Aorta (tissue), 5 donors: ENCODE measurements at regions of chr7 and their contacts with region 1.

Region 1: GRCh38 chr7:137606061-137606674 is 240.6 kb downstream of the DGKI start:
- DNase-seq: no peak
- ATAC-seq: no peak
- H3K4me3 ChIP-seq: no peak overlapping the region
- H3K27ac ChIP-seq: no peak overlapping the region
- H3K4me1 ChIP-seq: no peaks in the 10 kb centered on the region
- H3K27me3 ChIP-seq: no peaks in the 10 kb centered on the region

Region 2: DNA sequence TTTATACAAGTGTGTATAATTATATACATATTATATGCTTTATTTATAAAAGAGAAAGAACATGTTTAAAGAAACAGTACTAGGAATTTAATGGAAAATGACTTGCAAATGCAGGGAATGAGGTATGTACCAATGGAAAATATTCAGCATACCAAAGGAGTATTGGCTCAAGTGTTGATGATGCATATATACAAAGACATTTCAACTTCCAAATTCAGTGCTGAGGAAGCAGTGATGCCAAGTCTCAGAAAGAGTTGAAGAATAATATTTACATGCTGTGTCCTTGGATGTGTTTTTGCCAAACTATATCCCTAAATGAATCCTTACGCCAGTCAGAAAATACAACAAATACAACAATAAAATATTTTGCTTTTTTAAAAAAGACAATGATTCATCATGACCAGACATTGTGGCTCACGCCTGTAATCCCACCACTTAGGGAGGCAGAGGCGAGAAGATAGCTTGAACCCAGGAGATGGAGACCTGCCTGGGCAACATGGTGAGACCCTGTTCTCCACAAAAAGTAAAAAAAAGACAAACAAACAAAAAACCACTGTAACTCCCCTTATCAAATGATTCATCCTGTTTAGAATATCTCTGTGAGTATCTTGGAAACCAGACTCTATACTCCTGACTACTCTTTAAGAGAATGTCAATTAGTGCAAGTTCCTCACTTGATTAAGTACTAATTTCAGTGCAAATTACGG is 580.5 kb before region 1 on chr7:
- intact Hi-C with region 1: no loop called
- DNase-seq: no peak
- ATAC-seq: no peak
- H3K4me3 ChIP-seq: no peak overlapping the region
- H3K27ac ChIP-seq: no peak overlapping the region
- H3K4me1 ChIP-seq: no peaks in the 10 kb centered on the region
- H3K27me3 ChIP-seq: no peaks in the 10 kb centered on the region

Region 3: DNA sequence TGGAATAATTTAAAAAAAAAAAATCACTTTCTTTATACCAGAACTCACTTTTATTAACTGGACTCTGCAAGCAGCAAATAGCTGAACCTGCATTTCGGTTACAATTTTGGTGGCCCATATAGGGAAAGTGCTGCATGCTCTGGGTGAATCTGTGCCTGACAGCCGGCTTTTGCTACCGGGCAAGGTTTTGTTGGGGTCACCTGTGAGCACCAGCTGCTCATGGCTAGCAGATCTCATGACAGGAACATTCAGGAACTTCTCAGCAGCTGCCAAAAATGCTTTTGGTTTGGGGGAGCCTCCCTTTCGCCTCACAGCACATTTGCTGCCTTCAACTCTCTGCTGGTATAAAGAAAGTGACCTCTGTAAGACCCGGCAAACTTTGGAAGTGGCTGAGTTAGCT is 408.9 kb after region 1 on chr7:
- intact Hi-C with region 1: loop called (anchors 5 to 10 kb)
- DNase-seq: no peak
- ATAC-seq: no peak
- H3K4me3 ChIP-seq: no peak overlapping the region
- H3K27ac ChIP-seq: no peak overlapping the region
- H3K4me1 ChIP-seq: no peaks in the 10 kb centered on the region
- H3K27me3 ChIP-seq: no peaks in the 10 kb centered on the region

Region 4: DNA sequence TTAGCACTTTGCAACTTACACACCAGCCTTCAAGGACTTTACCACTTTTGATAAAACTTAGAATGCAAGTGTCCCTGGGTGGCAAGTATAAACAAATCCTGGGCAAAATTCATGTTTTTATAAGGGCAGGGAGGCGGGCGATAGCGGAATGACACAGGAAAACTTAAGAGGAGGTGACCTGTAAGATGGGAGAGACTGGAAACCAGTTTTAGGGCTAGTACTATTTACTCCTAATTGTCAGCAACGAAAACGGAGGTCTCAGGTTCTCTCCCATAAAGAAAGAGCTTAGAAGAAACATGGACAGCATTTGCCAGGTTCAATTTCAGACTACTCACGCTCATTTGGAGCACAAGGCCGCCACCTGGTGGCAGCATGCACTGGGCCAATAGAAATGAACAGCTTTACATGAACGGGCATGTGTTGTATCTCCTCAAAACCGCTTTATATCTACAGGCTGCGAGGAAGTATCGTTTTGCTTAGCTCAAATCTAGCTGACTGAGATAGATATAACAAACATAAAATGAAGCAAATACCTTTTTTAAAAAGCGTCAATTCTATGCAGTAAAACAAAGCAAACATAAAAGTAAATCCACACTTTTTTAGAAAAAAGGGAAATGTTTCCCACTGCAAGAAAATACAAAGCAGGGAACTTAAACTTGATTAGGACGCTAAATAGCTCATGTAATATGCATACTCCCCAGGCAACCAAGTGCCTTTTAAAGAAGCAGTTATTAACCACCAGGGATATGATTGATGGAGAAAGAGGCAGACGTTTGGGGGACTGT is 1132.6 kb after region 1 on chr7:
- intact Hi-C with region 1: loop called (anchors 10 kb)
- DNase-seq: peak; percentile 86 to 88
- ATAC-seq: peak; percentile 48
- H3K4me3 ChIP-seq: no peak overlapping the region
- H3K27ac ChIP-seq: no peak overlapping the region
- H3K4me1 ChIP-seq: no peaks in the 10 kb centered on the region
- H3K27me3 ChIP-seq: no peaks in the 10 kb centered on the region